Heart left ventricle (tissue), 16 donors: ENCODE measurements at regions of chrX and their contacts with region 1.

Region 1: DNA sequence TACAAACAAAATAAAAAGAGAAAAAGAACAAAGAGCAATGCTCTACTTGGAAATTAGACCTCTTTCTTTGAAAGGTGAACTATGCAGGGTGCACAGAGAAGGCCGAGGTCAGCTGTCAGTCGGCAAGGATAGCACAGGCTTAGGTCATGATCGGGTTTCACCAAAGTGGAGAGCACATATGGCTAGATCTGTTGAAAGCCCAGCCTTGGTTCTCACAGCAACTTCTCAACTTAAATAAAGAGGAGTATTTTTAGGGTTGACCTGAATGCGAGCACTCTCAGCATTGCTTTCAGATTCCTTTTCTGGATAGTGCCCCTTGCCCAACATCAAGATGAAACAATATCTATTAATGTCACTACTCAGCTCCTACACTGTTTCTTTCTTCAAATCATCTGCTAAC is 122.9 kb upstream of the GPC4 start:
- DNase-seq: no peak
- ATAC-seq: no peak
- H3K4me3 ChIP-seq: no peak overlapping the region
- H3K27ac ChIP-seq: no peak overlapping the region
- H3K4me1 ChIP-seq: no peaks in the 10 kb centered on the region
- H3K27me3 ChIP-seq: peaks cover 0 to 9% (median 0%) of the 10 kb centered on the region in 9 donors
- CTCF ChIP-seq: no peak
- POLR2A ChIP-seq: no peak

Region 2: DNA sequence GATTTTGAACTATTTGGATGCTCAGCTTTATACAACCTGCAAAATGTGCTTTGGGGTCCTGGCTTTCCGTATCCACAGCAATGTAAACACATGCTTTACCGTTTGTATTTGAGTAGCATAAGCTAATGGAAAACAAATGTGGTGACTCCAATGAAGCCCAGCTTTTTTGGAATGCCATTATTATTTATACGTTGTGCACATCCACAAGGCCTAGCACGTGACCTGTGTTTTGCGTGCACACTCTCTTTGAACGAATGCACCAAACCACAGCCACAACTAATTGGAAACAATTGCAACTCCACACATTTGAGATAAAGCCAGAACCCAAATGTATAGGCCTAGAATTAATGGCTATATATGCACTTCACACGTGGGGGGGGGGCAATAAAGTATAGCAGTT is 66.7 kb after region 1 on chrX:
- intact Hi-C with region 1: loop called in 1 of 10 experiments (anchors 5 kb)
- DNase-seq: no peak
- ATAC-seq: no peak
- H3K4me3 ChIP-seq: no peak overlapping the region
- H3K27ac ChIP-seq: no peak overlapping the region
- H3K4me1 ChIP-seq: peaks cover 0 to 19% (median 0%) of the 10 kb centered on the region in 12 donors
- H3K27me3 ChIP-seq: peaks cover 0 to 12% (median 0%) of the 10 kb centered on the region in 9 donors
- CTCF ChIP-seq: no peak
- POLR2A ChIP-seq: no peak